Panc1 (cell line): ENCODE measurements at regions of chr2 and their contacts with region 1.

Region 1: GRCh38 chr2:236180831-236181453 is 12.8 kb upstream of the GBX2 start:
- DNase-seq: peak; percentile 47
- ATAC-seq: no peak
- H3K4me3 ChIP-seq: no peak overlapping the region
- H3K27ac ChIP-seq: no peak overlapping the region; the same call in 1 of the 2 replicates
- H3K4me1 ChIP-seq: peaks cover 8% of the 10 kb centered on the region
- H3K27me3 ChIP-seq: no peaks in the 10 kb centered on the region
- CTCF ChIP-seq: peak; percentile 82

Region 2: DNA sequence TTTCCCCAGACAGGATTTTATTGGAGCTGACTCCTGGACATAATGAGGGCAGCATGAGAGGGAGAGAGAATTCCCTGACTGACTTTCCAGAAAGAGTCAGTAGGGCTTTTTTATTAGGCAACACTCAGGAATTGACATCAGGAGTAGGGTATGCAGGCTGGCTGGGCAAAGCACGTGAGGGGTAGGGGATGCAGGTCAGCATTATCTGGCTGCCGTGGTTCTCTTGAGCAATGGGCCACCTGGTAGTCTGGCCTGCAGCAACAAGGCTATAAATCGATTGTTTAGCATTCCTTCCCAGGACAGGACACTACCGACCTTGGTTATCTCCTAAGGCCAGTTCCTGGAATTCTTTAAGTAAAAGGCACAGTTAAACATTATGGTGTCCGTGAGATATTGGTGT is 847.9 kb before region 1 on chr2:
- CTCF ChIA-PET with region 1: no interaction called
- POLR2A ChIA-PET with region 1: interaction called, 12 read pairs
- in situ Hi-C with region 1: no loop called
- intact Hi-C with region 1: no loop called
- DNase-seq: no peak
- ATAC-seq: no peak
- H3K4me3 ChIP-seq: no peak overlapping the region
- H3K27ac ChIP-seq: no peak overlapping the region
- H3K4me1 ChIP-seq: no peaks in the 10 kb centered on the region
- H3K27me3 ChIP-seq: no peaks in the 10 kb centered on the region
- CTCF ChIP-seq: no peak

Region 3: DNA sequence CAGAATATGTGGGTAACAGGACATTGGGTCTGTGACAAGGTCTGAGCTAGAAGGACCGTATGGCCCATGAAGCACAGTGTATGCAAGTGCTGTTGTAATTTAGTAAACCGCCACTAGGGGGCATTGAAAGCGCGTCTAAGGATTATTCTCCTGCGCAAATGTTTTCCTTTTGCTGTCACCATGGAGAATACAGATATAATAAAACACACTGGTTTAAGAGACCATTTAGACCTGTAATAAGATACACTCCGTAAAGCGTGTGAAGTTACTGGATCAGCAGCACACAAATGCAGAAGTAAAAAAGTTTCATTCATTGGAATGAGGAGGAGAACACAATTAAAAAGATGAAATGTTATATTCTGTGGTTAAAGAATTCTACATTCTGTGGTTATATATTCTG is 414.7 kb before region 1 on chr2:
- CTCF ChIA-PET with region 1: interaction called, 5 read pairs
- POLR2A ChIA-PET with region 1: no interaction called
- in situ Hi-C with region 1: no loop called
- intact Hi-C with region 1: loop called (anchors 2 kb)
- DNase-seq: peak; percentile 51
- ATAC-seq: peak; percentile 92
- H3K4me3 ChIP-seq: no peak overlapping the region
- H3K27ac ChIP-seq: no peak overlapping the region
- H3K4me1 ChIP-seq: peaks cover 7% of the 10 kb centered on the region
- H3K27me3 ChIP-seq: no peaks in the 10 kb centered on the region
- CTCF ChIP-seq: peak; percentile 90

Region 4: GRCh38 chr2:235779444-235779896 is 401.5 kb before region 1 on chr2:
- CTCF ChIA-PET with region 1: interaction called, 8 read pairs
- POLR2A ChIA-PET with region 1: no interaction called
- in situ Hi-C with region 1: no loop called
- intact Hi-C with region 1: loop called (anchors 2 kb)
- DNase-seq: peak; percentile 46
- ATAC-seq: peak; percentile 96
- H3K4me3 ChIP-seq: no peak overlapping the region
- H3K27ac ChIP-seq: no peak overlapping the region
- H3K4me1 ChIP-seq: no peaks in the 10 kb centered on the region
- H3K27me3 ChIP-seq: no peaks in the 10 kb centered on the region
- CTCF ChIP-seq: peak; percentile 95

Region 5: DNA sequence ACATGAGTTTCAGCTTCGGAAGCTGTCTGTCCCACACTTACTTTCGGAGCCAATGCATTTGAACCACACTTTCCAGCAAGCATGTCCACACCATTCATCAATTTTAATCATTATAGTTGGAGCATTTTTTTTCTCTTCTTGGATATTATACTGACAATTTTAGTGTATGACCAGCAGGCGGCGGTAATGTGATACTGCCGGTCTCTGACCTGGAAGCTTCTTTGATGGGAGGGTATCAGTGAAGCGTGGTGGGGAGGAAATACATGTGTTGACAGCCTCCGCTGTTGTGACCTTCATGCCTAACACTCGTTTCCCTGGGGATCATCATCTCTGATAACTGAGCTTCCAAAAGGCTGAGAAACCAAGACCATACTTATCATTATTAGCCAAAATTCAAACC is 244.4 kb before region 1 on chr2:
- CTCF ChIA-PET with region 1: interaction called, 4 read pairs
- POLR2A ChIA-PET with region 1: no interaction called
- in situ Hi-C with region 1: no loop called
- intact Hi-C with region 1: loop called (anchors 10 kb)
- DNase-seq: no peak
- ATAC-seq: no peak
- H3K4me3 ChIP-seq: no peak overlapping the region
- H3K27ac ChIP-seq: no peak overlapping the region
- H3K4me1 ChIP-seq: no peaks in the 10 kb centered on the region
- H3K27me3 ChIP-seq: no peaks in the 10 kb centered on the region
- CTCF ChIP-seq: peak; percentile 88

Region 6: DNA sequence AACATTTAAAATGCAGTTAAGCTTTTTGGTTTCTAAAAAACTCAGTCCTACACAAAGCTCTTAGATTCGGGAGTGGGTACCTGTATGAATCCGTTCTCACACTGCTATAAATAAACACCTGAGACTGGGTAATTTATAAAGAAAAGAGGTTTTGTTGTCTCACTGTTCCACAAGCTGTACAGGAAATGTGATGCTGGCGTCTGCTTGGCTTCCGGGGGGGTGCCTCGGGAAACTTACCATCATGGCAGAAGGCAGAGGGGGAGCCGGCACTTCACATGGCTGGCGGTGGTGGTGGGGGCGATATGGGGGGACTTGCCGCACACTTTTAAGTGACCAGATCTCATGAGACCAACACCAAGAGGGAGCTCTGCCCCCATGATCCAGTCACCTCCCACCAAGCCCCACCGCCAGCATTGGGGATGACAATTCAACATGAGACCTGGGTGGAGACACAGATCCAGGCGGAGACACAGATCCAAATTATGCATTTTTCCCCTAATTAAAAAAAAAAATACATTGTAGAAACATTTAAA is 235.3 kb before region 1 on chr2:
- CTCF ChIA-PET with region 1: interaction called, 16 read pairs
- POLR2A ChIA-PET with region 1: no interaction called
- in situ Hi-C with region 1: no loop called
- intact Hi-C with region 1: no loop called
- DNase-seq: no peak
- ATAC-seq: no peak
- H3K4me3 ChIP-seq: no peak overlapping the region
- H3K27ac ChIP-seq: no peak overlapping the region
- H3K4me1 ChIP-seq: no peaks in the 10 kb centered on the region
- H3K27me3 ChIP-seq: no peaks in the 10 kb centered on the region
- CTCF ChIP-seq: no peak

Region 7: GRCh38 chr2:236168110-236169067 is 12.6 kb before region 1 on chr2 and contains the start of gene GBX2:
- CTCF ChIA-PET with region 1: interaction called, 10 read pairs
- POLR2A ChIA-PET with region 1: no interaction called
- in situ Hi-C with region 1: no loop called
- intact Hi-C with region 1: no loop called
- DNase-seq: no peak
- ATAC-seq: peak; percentile 87
- H3K4me3 ChIP-seq: peak within 1 kb of the TSS; percentile 67 to 76
- H3K27ac ChIP-seq: peak within 1 kb of the TSS; percentile 70
- H3K4me1 ChIP-seq: peaks cover 9% of the 10 kb centered on the region
- H3K27me3 ChIP-seq: no peaks in the 10 kb centered on the region
- CTCF ChIP-seq: peak; percentile 16; the same call in 1 of the 2 replicates
- total RNA-seq, gene GBX2: 10.2 TPM

Region 8: GRCh38 chr2:236338495-236339184 is 157.7 kb after region 1 on chr2:
- CTCF ChIA-PET with region 1: no interaction called
- POLR2A ChIA-PET with region 1: no interaction called
- in situ Hi-C with region 1: no loop called
- intact Hi-C with region 1: no loop called
- DNase-seq: no peak
- ATAC-seq: no peak
- H3K4me3 ChIP-seq: no peak overlapping the region
- H3K27ac ChIP-seq: no peak overlapping the region
- H3K4me1 ChIP-seq: no peaks in the 10 kb centered on the region
- H3K27me3 ChIP-seq: no peaks in the 10 kb centered on the region
- CTCF ChIP-seq: no peak

Region 9: DNA sequence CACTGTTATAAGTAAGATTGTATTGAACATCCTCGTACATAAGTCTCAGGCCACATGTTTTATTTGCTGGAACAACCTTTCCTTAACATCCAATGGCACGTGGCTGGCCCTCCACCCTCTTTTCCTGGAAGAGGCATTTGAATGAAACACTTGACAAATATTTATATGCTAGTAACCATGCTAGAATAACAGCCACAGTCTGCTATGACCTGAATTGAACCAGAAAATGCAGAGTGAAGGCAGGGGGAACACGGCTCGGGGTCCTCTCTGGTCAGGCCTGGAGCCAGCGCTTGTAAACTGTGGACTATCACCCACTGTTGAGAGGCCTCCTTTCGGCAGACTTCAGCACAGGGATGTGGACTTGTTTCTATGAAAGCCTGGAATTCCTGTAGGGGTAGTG is 706.6 kb after region 1 on chr2:
- CTCF ChIA-PET with region 1: no interaction called
- POLR2A ChIA-PET with region 1: no interaction called
- in situ Hi-C with region 1: no loop called
- intact Hi-C with region 1: no loop called
- DNase-seq: no peak
- ATAC-seq: no peak
- H3K4me3 ChIP-seq: no peak overlapping the region
- H3K27ac ChIP-seq: no peak overlapping the region
- H3K4me1 ChIP-seq: no peaks in the 10 kb centered on the region
- H3K27me3 ChIP-seq: peaks cover under 1% of the 10 kb centered on the region; the same call in 1 of the 2 replicates
- CTCF ChIP-seq: no peak